ENCODE measurements at regions of chr7 and their contacts with region 1.

Region 1: GRCh38 chr7:143008007-143008901 is 18.7 kb downstream of the OR9A2 start:
- DNase-seq: peak; percentile 54 to 88 (median 82)
- H3K4me3 ChIP-seq: no peak overlapping the region
- H3K27ac ChIP-seq: peak overlapping the region in 4 of 59 donors; percentile 5 to 81 (median 20)
- H3K27me3 ChIP-seq: no peaks in the 10 kb centered on the region
- CTCF ChIP-seq: peak; percentile 86 to 99 (median 98)

Region 2: DNA sequence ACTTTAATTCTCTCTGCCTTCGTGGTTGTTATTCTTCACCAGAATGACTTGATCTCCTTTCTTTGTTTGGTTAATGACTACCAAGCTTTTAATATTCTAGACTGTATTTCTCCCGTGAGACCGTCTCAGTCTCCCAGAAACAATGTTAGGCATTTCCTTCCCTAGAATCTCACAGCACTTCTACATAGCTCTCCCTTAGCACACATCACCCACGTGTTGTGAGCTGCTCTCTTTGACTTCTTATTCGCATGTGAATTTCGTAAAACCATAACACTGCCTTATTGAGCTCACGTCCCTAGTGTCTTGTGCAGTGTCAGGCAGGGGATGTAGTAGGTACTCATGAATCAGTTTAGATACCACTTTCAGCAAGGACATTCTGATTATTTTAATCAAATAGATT is 954.3 kb before region 1 on chr7:
- intact Hi-C with region 1: no loop called
- DNase-seq: no peak
- H3K4me3 ChIP-seq: no peak overlapping the region
- H3K27ac ChIP-seq: no peak overlapping the region
- H3K27me3 ChIP-seq: peaks cover 0 to 5% (median 0%) of the 10 kb centered on the region in 45 donors
- CTCF ChIP-seq: no peak

Region 3: DNA sequence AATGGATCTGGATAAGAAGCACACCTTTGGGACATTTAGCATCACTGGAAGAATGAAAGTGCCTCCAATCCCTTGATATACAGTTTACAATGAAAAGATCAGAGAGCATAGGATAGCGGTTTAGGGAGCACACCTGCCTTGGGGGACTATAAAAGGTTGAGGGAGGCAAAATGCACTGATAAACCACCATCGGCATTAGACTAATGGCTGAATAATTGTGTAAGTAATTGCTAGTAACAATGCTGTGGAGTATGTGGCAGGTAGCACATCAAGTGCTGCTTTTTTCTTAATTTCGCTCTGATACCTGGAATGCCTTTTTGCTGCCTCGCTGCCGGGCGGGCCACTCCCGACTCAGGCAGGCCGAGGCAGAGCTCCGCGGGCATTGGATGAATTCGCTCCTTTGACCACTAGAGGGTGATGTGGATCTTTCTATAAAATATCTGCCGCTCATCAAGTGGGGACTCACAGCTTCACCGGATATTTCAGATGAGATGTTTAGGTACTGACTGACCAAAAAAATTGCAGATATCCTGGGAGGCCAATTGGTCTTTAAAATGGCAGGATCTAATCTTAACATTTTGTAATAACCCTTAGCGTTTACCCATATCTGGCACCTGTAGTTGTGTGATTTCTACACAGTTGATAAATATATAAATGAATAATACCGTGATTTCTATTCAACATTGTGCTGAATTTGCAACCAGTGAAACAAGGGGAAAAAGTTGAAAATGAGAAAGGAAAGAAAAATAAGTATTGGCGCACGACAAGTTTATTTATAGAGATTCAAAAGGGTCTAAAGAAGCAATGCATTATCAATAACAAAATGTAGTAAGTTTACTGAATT is 375.7 kb before region 1 on chr7:
- intact Hi-C with region 1: loop called in 1 of 2 experiments (anchors 10 kb)
- DNase-seq: peak in 7 of 10 donors; percentile 30 to 75 (median 55)
- H3K4me3 ChIP-seq: no peak overlapping the region
- H3K27ac ChIP-seq: no peak overlapping the region
- H3K27me3 ChIP-seq: peaks cover 0 to 28% (median 2%) of the 10 kb centered on the region in 45 donors
- CTCF ChIP-seq: peak; percentile 58 to 94 (median 85)

Region 4: GRCh38 chr7:142853739-142854371 is 154.4 kb before region 1 on chr7:
- intact Hi-C with region 1: loop called (anchors 1 to 5 kb)
- DNase-seq: peak in 5 of 10 donors; percentile 52 to 74 (median 67)
- H3K4me3 ChIP-seq: peak overlapping the region; percentile 52 to 89 (median 76)
- H3K27ac ChIP-seq: peak overlapping the region in 57 of 59 donors; percentile 15 to 93 (median 82)
- H3K27me3 ChIP-seq: no peaks in the 10 kb centered on the region
- CTCF ChIP-seq: peak; percentile 46 to 88 (median 76)

Region 5: DNA sequence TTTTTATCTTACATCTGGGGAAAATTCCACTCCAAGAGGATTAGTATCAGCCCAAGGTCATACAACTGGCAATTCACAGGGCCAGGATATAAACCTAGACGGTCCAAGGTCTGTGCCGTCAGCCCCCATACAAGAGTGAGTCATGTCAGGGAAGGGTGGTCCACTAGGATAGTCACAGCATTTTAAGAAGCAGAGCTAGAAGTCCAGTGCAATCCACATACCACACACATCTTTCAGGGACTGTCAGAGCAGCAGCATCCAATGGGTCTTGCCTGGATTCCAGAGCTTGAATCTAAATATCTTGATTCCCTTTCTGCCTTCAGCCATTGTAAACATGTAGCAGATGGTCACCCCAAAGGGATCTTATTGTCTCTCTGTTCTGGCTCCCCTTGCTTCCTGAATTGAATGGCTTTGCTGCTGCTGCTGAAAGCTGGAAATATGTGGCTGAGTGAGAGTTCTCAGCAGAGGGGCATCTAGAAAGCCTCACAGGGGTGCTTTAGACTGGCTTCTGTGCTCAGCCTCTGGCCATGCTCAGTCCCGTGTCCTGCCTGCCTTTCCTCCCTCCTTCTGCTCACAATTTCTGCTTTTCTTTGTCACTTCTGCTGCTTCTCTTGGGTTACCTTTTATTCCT is 34.0 kb after region 1 on chr7:
- intact Hi-C with region 1: no loop called
- DNase-seq: no peak
- H3K4me3 ChIP-seq: no peak overlapping the region
- H3K27ac ChIP-seq: peak overlapping the region in 27 of 59 donors; percentile 5 to 66 (median 36)
- H3K27me3 ChIP-seq: no peaks in the 10 kb centered on the region
- CTCF ChIP-seq: no peak

Region 6: GRCh38 chr7:143214789-143215679 is 206.8 kb after region 1 on chr7:
- intact Hi-C with region 1: loop called (anchors 1 to 5 kb)
- DNase-seq: peak in 4 of 10 donors; percentile 46 to 67 (median 50)
- H3K4me3 ChIP-seq: no peak overlapping the region
- H3K27ac ChIP-seq: peak overlapping the region in 52 of 59 donors; percentile 2 to 86 (median 62)
- H3K27me3 ChIP-seq: no peaks in the 10 kb centered on the region
- CTCF ChIP-seq: peak; percentile 98 to 100 (median 100)

Region 7: GRCh38 chr7:143305423-143306070 is 297.3 kb after region 1 on chr7:
- intact Hi-C with region 1: loop called in 1 of 2 experiments (anchors 10 kb)
- DNase-seq: peak; percentile 45 to 83 (median 80)
- H3K4me3 ChIP-seq: no peak overlapping the region
- H3K27ac ChIP-seq: peak overlapping the region in 8 of 59 donors; percentile 10 to 53 (median 24)
- H3K27me3 ChIP-seq: no peaks in the 10 kb centered on the region
- CTCF ChIP-seq: peak; percentile 42 to 93 (median 83)

Measured in dorsolateral prefrontal cortex (tissue), 120 donors.